ENCODE measurements at regions of chr14 and their contacts with region 1.

Region 1: DNA sequence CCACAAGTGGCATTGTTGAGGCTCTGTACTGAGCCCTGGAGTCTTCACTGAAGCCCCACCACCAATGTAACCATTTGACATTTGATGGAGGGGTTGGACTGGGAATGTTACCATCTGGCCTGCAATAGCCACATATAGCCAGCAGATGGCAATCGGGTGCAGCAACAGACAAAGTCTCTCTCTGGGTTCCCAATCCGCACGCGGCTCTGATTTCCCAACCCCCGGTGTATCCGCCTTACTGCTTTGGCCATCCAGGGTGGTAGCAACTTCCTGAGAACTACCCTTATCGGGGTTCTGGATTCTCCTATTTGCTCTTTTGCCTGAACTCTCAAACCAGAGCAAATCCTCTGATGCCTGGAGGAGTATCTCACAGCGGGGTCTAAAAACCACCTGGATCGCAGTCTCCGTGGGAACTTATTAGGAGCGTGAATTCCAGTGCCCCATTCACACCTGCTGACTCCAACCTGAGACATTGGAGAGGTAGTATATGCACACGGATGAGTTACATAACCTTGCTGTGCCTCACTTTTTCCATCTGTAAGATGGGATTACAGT is 14.2 kb downstream of the VRTN start:
- DNase-seq: peak; percentile 84 to 86
- H3K4me3 ChIP-seq: no peak overlapping the region
- H3K4me3 Mint-ChIP-seq: no peak overlapping the region
- H3K27ac Mint-ChIP-seq: no peak overlapping the region
- H3K4me1 ChIP-seq: no peaks in the 10 kb centered on the region; the same call in 1 of the 2 replicates
- H3K4me1 Mint-ChIP-seq: no peaks in the 10 kb centered on the region
- H3K27me3 ChIP-seq: no peaks in the 10 kb centered on the region
- H3K27me3 Mint-ChIP-seq: no peaks in the 10 kb centered on the region
- CTCF ChIP-seq: peak; percentile 91 to 92

Region 2: GRCh38 chr14:74324931-74325361 is 37.5 kb before region 1 on chr14:
- CTCF ChIA-PET with region 1: no interaction called
- POLR2A ChIA-PET with region 1: no interaction called
- intact Hi-C with region 1: loop called (anchors 1 kb)
- DNase-seq: peak in 1 of 2 experiments; percentile 51
- H3K4me3 ChIP-seq: no peak overlapping the region
- H3K4me3 Mint-ChIP-seq: no peak overlapping the region
- H3K27ac Mint-ChIP-seq: no peak overlapping the region
- H3K4me1 ChIP-seq: peaks cover 8% of the 10 kb centered on the region
- H3K4me1 Mint-ChIP-seq: peaks cover 19% of the 10 kb centered on the region
- H3K27me3 ChIP-seq: no peaks in the 10 kb centered on the region
- H3K27me3 Mint-ChIP-seq: peaks cover 4% of the 10 kb centered on the region
- CTCF ChIP-seq: peak; percentile 76 to 78

Region 3: DNA sequence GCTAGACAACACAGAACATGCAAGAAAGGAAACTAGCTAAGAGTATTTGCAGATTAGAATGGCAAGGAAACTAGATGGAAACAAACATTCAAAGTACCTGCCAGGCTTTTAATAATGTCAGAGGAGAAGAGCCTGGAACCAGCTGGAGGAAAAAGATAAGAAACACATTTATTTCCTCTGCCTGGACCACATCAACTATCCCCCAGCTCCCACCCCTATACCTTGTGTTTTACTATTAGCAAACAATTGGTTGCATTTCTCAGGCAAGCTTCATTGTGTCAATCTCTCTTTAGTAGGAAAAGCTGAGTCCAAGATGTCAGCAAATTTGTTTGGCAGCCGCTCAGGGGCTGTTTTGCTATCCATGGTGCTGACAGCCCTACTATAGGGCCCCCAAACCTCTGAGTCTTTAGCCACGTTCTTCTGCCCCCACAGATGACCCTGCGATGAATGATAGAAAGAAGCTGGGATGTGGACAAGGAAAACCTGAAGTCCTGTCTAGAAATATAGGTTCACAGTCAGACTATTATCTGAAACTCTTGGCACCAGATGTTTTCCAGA is 75.1 kb after region 1 on chr14:
- CTCF ChIA-PET with region 1: no interaction called
- POLR2A ChIA-PET with region 1: no interaction called
- intact Hi-C with region 1: loop called (anchors 10 kb)
- DNase-seq: peak in 1 of 2 experiments; percentile 37
- H3K4me3 ChIP-seq: no peak overlapping the region
- H3K4me3 Mint-ChIP-seq: peak overlapping the region; percentile 27
- H3K27ac Mint-ChIP-seq: peak overlapping the region; percentile 65
- H3K4me1 ChIP-seq: peaks cover 28% of the 10 kb centered on the region
- H3K4me1 Mint-ChIP-seq: peaks cover 26% of the 10 kb centered on the region
- H3K27me3 ChIP-seq: no peaks in the 10 kb centered on the region
- H3K27me3 Mint-ChIP-seq: no peaks in the 10 kb centered on the region
- CTCF ChIP-seq: no peak

Region 4: DNA sequence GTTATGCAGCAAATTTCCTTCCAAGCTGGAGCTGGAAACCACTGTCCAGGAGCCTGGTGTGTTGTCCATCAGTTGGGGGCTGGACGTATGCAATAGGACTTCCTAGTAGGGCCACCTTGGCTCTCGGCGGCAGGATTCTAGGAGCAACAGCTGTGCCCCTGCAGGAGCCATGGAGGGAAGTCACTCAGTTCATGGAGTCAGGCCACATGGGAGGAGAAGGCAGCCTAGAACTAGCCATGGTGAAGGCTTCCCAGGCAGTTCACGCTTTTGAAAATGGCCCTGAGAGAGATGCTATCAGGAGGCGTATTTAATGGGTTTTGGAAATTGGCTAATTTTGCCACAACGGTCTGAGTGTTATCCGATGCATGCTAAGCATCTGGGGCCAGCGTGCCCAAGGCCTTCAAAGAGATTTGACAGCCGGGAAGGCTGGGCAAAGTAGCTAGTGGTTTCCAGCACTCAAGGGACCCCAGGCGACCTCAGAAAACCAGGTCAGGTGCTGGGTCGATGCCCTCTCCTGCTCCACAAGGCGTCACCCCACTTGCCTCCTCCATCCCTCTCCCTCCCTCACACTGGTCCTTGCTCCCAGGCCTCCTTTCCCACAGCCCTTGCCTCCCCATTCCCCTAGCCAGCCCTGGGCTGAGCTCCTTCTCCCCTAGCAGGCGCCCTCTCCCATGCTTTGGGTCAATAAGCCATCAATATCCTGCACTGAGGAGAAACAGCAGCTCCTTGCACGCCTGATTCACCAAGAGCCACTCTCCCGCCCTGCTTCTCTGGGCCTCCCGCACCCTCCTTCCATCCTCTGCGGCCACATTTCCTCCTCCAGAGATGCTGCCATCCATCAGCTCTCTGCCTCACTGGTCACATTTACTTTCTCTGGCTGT is 94.5 kb after region 1 on chr14:
- CTCF ChIA-PET with region 1: no interaction called
- POLR2A ChIA-PET with region 1: no interaction called
- intact Hi-C with region 1: no loop called
- DNase-seq: no peak
- H3K4me3 ChIP-seq: no peak overlapping the region
- H3K4me3 Mint-ChIP-seq: no peak overlapping the region
- H3K27ac Mint-ChIP-seq: no peak overlapping the region
- H3K4me1 ChIP-seq: no peaks in the 10 kb centered on the region
- H3K4me1 Mint-ChIP-seq: no peaks in the 10 kb centered on the region
- H3K27me3 ChIP-seq: no peaks in the 10 kb centered on the region
- H3K27me3 Mint-ChIP-seq: no peaks in the 10 kb centered on the region
- CTCF ChIP-seq: no peak

Region 5: GRCh38 chr14:74478996-74479635 is 116.7 kb after region 1 on chr14:
- CTCF ChIA-PET with region 1: no interaction called
- POLR2A ChIA-PET with region 1: no interaction called
- intact Hi-C with region 1: loop called (anchors 1 kb)
- DNase-seq: peak in 1 of 2 experiments; percentile 55
- H3K4me3 ChIP-seq: no peak overlapping the region
- H3K4me3 Mint-ChIP-seq: no peak overlapping the region
- H3K27ac Mint-ChIP-seq: no peak overlapping the region
- H3K4me1 ChIP-seq: no peaks in the 10 kb centered on the region; the same call in 1 of the 2 replicates
- H3K4me1 Mint-ChIP-seq: no peaks in the 10 kb centered on the region
- H3K27me3 ChIP-seq: no peaks in the 10 kb centered on the region
- H3K27me3 Mint-ChIP-seq: no peaks in the 10 kb centered on the region
- CTCF ChIP-seq: peak; percentile 72 to 84

Region 6: GRCh38 chr14:74493343-74494261 is 131.2 kb after region 1 on chr14 and contains the start of gene ISCA2:
- CTCF ChIA-PET with region 1: interaction called, 3 read pairs
- POLR2A ChIA-PET with region 1: no interaction called
- intact Hi-C with region 1: loop called (anchors 1 kb)
- DNase-seq: peak; percentile 100
- H3K4me3 ChIP-seq: peak within 1 kb of the TSS; percentile 97
- H3K4me3 Mint-ChIP-seq: no peak within 1 kb of the TSS
- H3K27ac Mint-ChIP-seq: no peak within 1 kb of the TSS
- H3K4me1 ChIP-seq: peaks cover 27% of the 10 kb centered on the region
- H3K4me1 Mint-ChIP-seq: peaks cover 6% of the 10 kb centered on the region
- H3K27me3 ChIP-seq: no peaks in the 10 kb centered on the region
- H3K27me3 Mint-ChIP-seq: no peaks in the 10 kb centered on the region
- CTCF ChIP-seq: no peak
- total RNA-seq, gene ISCA2: 28.5 and 33.0 TPM in 2 replicates